Activated T-helper 2 cell treated with anti-CD3 and anti-CD28 coated beads, Interferon-gamma antibody, Interleukin-2, Interleukin-4, amounts not matched to agents 10 μg/mL and 5 μg/mL and 100 μg/mL, durations not matched to agents 14 hours and 24 hours and 36 hours (primary cell): ENCODE measurements at regions of chr1 and their contacts with region 1.

Region 1: DNA sequence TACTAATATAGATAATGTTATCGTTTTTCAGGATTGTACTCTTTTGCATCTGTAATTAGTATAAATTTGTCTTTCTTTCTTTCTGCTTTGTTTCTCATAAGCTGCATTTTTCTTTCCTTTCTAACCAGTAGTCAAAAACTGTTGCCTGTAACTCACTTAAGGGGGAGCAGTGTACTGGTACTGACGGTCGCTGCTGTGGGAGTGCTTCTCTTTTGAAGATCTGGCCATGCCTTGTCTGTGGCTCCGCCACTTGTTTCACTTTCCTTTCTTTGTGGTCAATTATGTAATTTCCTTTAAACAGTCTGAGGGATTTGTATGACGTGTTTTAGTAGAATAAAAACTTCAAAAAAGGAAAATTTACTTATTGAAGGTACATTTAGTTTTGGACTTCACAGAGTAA is 37.0 kb downstream of the MIA3 start:
- DNase-seq: peak; percentile 73
- H3K4me3 Mint-ChIP-seq: peak overlapping the region; percentile 10
- H3K27ac Mint-ChIP-seq: peak overlapping the region; percentile 35
- H3K4me1 Mint-ChIP-seq: peaks cover 54% of the 10 kb centered on the region
- H3K27me3 Mint-ChIP-seq: no peaks in the 10 kb centered on the region

Region 2: GRCh38 chr1:221725735-221726672 is 928.8 kb before region 1 on chr1:
- intact Hi-C with region 1: loop called (anchors 10 kb)
- DNase-seq: no peak
- H3K4me3 Mint-ChIP-seq: peak overlapping the region; percentile 69
- H3K27ac Mint-ChIP-seq: peak overlapping the region; percentile 95
- H3K4me1 Mint-ChIP-seq: peaks cover 84% of the 10 kb centered on the region
- H3K27me3 Mint-ChIP-seq: no peaks in the 10 kb centered on the region

Region 3: GRCh38 chr1:222643938-222644635 is 10.8 kb before region 1 on chr1:
- intact Hi-C with region 1: loop called (anchors 1 kb)
- DNase-seq: peak; percentile 97
- H3K4me3 Mint-ChIP-seq: peak overlapping the region; percentile 99
- H3K27ac Mint-ChIP-seq: peak overlapping the region; percentile 94
- H3K4me1 Mint-ChIP-seq: peaks cover 18% of the 10 kb centered on the region
- H3K27me3 Mint-ChIP-seq: no peaks in the 10 kb centered on the region

Region 4: DNA sequence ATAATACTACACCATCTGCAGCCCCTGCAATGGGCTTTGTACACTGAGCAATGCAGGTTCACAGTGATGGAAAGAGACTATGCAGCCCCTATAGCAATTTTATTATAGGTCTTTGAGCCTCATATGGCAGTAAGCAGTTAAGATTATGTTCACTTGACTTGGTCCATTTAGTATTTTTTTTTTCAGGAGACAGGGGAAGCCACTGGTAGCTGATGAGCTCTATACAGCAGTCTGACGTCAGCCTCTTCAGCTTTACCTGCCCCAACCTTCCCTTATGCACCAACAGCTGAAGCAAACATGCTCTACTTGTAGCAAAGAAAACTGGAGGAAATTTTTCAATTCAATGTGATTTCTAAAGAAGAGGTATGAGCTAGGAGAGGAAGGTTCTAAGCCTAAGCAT is 25.2 kb after region 1 on chr1:
- intact Hi-C with region 1: no loop called
- DNase-seq: no peak
- H3K4me3 Mint-ChIP-seq: no peak overlapping the region
- H3K27ac Mint-ChIP-seq: no peak overlapping the region
- H3K4me1 Mint-ChIP-seq: no peaks in the 10 kb centered on the region
- H3K27me3 Mint-ChIP-seq: no peaks in the 10 kb centered on the region

Region 5: DNA sequence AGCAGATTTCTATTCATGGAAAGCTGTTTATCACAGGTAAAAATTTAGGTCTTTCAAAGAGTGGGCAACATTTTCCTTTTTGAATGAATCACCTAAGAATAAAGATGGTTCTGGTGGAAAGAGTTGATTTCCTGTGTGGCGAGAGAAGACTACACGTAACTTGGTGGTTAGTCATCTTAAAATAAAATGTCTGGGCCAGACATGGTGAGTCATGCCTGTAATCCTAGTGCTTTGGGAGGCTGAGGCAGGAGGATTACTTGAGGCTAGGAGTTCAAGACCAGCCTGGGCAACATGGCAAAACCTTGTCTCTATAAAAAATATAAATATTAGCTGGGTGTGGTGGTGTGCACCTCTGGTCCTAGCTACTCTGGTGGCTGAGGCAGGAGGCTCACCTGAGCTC is 225.7 kb after region 1 on chr1:
- intact Hi-C with region 1: loop called (anchors 10 kb)
- DNase-seq: no peak
- H3K4me3 Mint-ChIP-seq: no peak overlapping the region
- H3K27ac Mint-ChIP-seq: no peak overlapping the region
- H3K4me1 Mint-ChIP-seq: peaks cover 11% of the 10 kb centered on the region
- H3K27me3 Mint-ChIP-seq: no peaks in the 10 kb centered on the region

Region 6: GRCh38 chr1:223031733-223032601 is 377.1 kb after region 1 on chr1:
- intact Hi-C with region 1: no loop called
- DNase-seq: no peak
- H3K4me3 Mint-ChIP-seq: no peak overlapping the region
- H3K27ac Mint-ChIP-seq: no peak overlapping the region
- H3K4me1 Mint-ChIP-seq: no peaks in the 10 kb centered on the region
- H3K27me3 Mint-ChIP-seq: no peaks in the 10 kb centered on the region

Region 7: DNA sequence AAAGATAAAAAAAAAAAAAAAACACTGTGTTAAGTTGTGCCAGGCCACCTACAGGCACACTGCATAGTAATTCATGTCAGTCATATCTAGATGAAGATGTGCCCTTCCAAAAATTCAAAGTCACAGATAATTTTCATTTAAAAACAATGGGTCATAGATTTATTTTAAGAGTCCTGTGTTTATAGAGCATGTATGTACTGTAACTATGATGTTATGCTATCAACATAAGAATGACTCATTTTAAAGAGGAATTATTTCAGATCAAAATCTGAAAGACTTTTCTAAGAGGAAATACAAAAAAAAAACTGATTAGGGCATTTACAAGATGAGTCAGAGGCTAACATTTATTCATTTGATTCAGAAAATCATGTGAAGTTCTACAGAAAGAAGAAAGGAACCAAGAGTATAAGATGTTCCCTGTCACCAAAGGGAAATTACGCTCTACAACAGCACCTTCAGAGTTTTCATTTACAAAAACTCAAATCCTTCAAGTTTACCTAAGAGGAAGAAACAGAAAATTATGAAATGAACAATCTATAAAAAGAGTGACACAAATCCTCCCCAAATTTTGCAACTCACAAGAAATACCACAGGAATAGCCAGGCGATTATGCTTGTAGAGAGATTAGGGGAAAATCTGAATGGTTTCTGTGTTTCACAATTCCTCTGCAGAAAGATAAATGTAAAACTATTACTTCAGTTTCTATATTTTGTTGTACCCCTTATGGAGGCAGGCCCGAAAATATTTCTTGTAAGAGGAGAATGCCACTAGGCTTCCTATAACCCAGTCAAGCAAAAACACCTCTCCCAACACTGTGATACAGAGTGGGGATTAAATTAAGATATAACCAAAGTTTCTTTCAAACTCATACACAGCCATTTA is 1177.1 kb after region 1 on chr1:
- intact Hi-C with region 1: loop called (anchors 10 kb)
- DNase-seq: no peak
- H3K4me3 Mint-ChIP-seq: peak overlapping the region; percentile 54
- H3K27ac Mint-ChIP-seq: peak overlapping the region; percentile 92
- H3K4me1 Mint-ChIP-seq: peaks cover 24% of the 10 kb centered on the region
- H3K27me3 Mint-ChIP-seq: no peaks in the 10 kb centered on the region